A549 (cell line): ENCODE measurements at regions of chr15 and their contacts with region 1.

Region 1: GRCh38 chr15:78108299-78109084 is 16.1 kb downstream of the SH2D7 start:
- DNase-seq: peak; percentile 89 to 98
- ATAC-seq: peak; percentile 85 to 96
- H3K4me3 ChIP-seq: no peak overlapping the region
- H3K27ac ChIP-seq: no peak overlapping the region
- H3K4me1 ChIP-seq: no peaks in the 10 kb centered on the region
- CTCF ChIP-seq: peak; percentile 99
- EP300 ChIP-seq: no peak
- POLR2A ChIP-seq: no peak
- RAD21 ChIP-seq: peak; percentile 92 to 95

Region 2: DNA sequence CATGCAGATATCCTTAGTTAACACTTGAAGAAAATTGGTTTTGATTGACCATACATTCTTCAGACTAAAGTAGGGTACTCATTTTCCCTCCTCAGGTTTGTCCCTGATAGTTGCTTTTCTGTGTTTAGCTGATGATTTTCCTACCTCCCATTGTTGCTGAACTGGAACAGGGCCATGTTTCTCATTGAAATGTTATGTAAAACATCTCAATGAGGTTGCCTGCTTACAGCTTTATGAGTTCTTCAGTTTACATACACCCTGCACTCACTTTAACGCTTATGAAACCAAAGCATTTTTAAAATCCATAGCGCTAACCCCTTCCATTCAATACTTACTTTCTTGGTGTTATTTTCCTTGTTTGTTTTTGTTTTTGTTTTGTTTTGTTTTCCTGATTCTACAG is 625.9 kb before region 1 on chr15:
- CTCF ChIA-PET with region 1: no interaction called
- POLR2A ChIA-PET with region 1: no interaction called
- DNase-seq: no peak
- ATAC-seq: no peak
- H3K4me3 ChIP-seq: no peak overlapping the region
- H3K27ac ChIP-seq: no peak overlapping the region
- H3K4me1 ChIP-seq: peaks cover 9% of the 10 kb centered on the region; the same call in 2 of the 3 replicates
- CTCF ChIP-seq: no peak
- EP300 ChIP-seq: no peak
- POLR2A ChIP-seq: no peak
- RAD21 ChIP-seq: no peak

Region 3: GRCh38 chr15:77821188-77821958 is 287.1 kb before region 1 on chr15:
- CTCF ChIA-PET with region 1: no interaction called
- POLR2A ChIA-PET with region 1: no interaction called
- DNase-seq: peak; percentile 77 to 93
- ATAC-seq: peak; percentile 76 to 92
- H3K4me3 ChIP-seq: no peak overlapping the region
- H3K27ac ChIP-seq: no peak overlapping the region
- H3K4me1 ChIP-seq: peaks cover 8% of the 10 kb centered on the region; the same call in 1 of the 3 replicates
- CTCF ChIP-seq: peak; percentile 81
- EP300 ChIP-seq: no peak
- POLR2A ChIP-seq: no peak
- RAD21 ChIP-seq: peak; percentile 90 to 95

Region 4: DNA sequence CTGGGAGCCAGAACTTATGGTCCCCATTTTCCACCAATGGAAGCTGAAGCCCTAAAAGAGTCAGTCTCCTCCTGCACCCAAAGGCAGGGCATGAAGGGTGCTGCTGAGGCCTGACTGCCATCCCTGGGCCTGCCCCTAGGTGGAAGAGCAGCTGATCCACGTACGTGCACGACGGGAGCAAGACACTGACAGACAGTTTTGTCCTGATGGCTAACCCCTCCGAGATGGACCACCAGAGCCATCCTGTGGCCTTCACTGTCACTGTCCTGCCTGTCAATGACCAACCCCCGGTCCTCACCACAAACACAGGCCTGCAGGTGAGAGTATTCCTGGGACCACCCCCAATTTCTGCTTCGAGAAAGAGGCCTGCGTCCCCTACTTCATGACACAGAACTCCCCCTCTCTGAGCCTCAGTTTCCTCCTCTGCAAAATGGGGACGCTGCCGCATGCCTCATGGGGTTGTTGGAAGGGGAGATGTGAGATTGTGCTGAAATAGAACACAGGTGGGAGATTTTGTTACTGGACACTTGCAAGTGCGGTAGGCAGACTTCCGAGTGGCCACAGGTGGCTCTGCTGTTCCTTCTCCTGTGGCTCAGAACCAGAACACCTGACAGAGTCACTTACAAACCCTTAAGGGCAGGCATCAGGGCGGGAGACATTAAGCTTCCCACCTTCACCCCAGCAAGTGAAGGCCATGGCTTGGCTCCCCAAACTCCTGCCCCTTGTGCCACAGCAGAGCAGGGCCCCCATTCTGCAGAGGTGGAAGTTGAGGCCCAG is 206.3 kb before region 1 on chr15:
- CTCF ChIA-PET with region 1: interaction called, 14 read pairs
- POLR2A ChIA-PET with region 1: no interaction called
- DNase-seq: peak; percentile 32 to 49
- ATAC-seq: peak; percentile 53 to 76; a peak in 3 of 6 replicates
- H3K4me3 ChIP-seq: no peak overlapping the region
- H3K27ac ChIP-seq: no peak overlapping the region
- H3K4me1 ChIP-seq: no peaks in the 10 kb centered on the region
- CTCF ChIP-seq: no peak
- EP300 ChIP-seq: no peak
- POLR2A ChIP-seq: no peak
- RAD21 ChIP-seq: no peak

Region 5: DNA sequence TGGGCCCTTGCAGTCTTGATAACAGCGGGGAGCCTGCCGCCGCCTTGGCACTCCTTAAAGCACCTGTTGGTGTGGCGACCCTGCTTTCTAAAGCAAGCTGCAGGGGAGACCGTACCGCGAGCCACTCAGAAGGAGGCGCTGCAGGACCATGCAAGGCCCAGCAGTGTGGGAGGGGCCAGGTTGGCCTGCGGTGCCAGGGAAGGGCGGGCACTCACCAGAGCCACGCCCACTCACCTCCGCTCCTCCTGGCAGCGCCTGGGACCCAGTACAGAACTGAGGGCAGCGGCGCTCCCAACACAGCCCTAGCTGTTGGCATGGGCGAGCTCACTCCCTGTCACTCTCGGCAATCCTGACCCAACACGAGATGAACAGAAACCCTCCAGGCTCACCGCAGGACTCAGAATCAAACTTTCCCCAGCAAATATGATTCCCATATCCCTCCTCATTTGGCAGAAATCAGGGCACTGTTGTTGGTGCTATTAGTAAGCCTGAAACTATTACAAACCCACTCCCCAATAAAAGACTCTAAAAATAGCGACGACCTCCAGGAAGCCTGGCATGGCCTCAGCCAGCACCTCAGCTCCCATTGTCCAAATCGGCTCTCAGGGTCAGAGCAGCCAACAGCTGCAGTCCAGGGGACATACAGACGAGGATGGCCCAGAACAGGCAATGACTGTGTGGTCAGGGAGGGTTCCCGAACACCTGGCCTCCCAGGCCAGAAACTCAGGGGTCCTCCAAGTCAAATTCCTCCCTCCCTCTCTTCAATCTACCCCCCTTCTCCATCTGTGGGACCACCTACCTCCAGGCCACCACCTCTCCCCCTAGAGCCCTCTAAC is 108.2 kb before region 1 on chr15:
- CTCF ChIA-PET with region 1: interaction called, 265 read pairs
- POLR2A ChIA-PET with region 1: no interaction called
- DNase-seq: peak; percentile 86 to 92
- ATAC-seq: peak; percentile 88 to 98
- H3K4me3 ChIP-seq: no peak overlapping the region
- H3K27ac ChIP-seq: no peak overlapping the region
- H3K4me1 ChIP-seq: peaks cover 6% of the 10 kb centered on the region
- CTCF ChIP-seq: peak; percentile 90
- EP300 ChIP-seq: no peak
- POLR2A ChIP-seq: no peak
- RAD21 ChIP-seq: peak; percentile 98 to 99

Region 6: GRCh38 chr15:78093242-78094020 is 15.1 kb before region 1 on chr15:
- CTCF ChIA-PET with region 1: interaction called, 93 read pairs
- POLR2A ChIA-PET with region 1: no interaction called
- DNase-seq: no peak
- ATAC-seq: peak in 1 of 2 experiments; percentile 24; a peak in 2 of 6 replicates
- H3K4me3 ChIP-seq: no peak overlapping the region
- H3K27ac ChIP-seq: no peak overlapping the region
- H3K4me1 ChIP-seq: 0 out of 3 replicates have a peak, but pooled peaks cover 3% of the 10 kb centered on the region
- CTCF ChIP-seq: no peak
- EP300 ChIP-seq: no peak
- POLR2A ChIP-seq: no peak
- RAD21 ChIP-seq: no peak

Region 7: DNA sequence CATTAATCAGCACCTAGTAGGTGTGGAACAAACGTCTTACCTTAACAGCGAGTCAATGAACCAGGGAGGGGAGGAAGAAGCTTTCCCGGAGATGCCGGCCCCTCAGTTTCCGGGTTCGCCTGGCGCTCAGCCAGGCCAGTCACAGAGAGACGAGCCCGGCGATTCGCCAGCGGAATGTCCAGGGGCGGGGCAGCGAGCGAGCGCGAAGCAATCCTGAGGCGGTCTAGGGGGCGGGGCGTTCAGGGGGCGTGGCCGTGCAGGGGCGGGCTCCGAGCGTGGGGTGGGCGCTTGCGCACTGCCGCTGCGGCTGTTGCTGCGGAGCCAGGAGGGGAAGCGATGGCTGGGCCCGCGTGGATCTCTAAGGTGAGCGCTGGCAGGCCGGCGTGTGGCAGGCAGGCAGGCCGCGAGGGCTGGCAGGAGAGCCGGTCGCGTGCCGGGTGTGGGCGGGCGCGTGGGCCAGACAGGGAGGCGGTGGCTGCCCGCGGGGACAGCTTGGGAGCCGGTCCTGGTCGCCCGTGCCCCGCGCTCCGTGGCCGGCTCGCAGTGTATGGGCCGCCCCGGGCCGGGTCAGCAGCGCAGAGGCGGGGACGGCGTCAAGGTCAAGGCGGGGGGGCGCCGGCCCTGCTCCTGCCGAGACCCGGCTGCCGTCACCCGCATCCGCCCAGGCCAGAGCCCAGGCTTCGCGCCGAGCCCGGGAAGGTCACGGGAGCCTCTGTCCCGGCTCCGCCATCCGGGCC is 40.7 kb after region 1 on chr15 and contains the start of gene IDH3A:
- CTCF ChIA-PET with region 1: interaction called, 26 read pairs
- POLR2A ChIA-PET with region 1: no interaction called
- DNase-seq: peak; percentile 97
- ATAC-seq: peak; percentile 93 to 95
- H3K4me3 ChIP-seq: peak within 1 kb of the TSS; percentile 74
- H3K27ac ChIP-seq: peak within 1 kb of the TSS; percentile 80 to 92
- H3K4me1 ChIP-seq: peaks cover 16% of the 10 kb centered on the region
- CTCF ChIP-seq: no peak
- EP300 ChIP-seq: no peak
- POLR2A ChIP-seq: peak; percentile 97
- RAD21 ChIP-seq: no peak
- polyA plus RNA-seq, gene IDH3A: 148 and 149 TPM in 2 replicates

Region 8: DNA sequence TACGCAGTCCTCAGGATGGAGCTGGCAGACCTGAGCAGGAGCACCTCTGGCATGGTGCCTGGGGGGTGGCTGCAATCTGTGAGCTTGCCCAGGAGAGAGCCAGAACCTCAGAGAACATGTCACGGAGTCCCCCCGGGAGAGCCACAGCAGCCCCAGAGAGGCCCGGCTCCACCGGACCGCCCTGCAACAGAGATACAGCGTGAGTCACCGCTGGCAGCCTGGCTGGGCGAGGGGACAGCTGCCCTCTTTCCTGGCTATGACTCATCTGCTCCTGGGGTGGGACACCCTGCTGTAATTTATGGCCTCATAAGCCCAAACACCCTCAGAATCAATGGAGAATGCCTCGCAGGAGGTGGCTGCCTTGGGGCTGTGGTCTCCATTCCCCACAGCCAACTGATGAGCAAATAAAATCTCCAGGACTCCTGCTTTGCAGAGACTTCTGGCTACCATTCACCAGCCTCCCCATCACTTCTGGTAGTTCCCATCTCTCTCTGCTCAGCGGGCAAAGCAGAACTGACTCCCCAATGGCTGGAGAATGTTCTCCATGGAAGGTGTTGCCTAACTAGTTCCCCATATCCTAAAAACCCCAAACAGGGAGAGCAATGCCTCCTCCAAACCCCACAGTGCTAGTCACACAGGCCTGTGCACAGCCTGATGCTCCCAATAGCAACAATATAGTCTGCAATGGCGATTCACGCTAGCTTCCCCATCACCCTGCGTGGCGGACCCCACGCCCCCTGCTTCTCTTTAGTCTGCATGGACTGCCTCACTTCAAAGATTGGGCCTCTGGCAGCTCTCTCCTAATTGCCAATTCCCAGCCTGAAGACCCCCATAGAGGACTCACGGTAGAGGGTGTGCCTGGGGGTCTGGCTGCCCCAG is 104.3 kb after region 1 on chr15:
- CTCF ChIA-PET with region 1: interaction called, 11 read pairs
- POLR2A ChIA-PET with region 1: no interaction called
- DNase-seq: peak; percentile 66 to 89
- ATAC-seq: peak; percentile 82 to 88
- H3K4me3 ChIP-seq: no peak overlapping the region
- H3K27ac ChIP-seq: peak overlapping the region; percentile 52 to 69
- H3K4me1 ChIP-seq: peaks cover 56% of the 10 kb centered on the region
- CTCF ChIP-seq: no peak
- EP300 ChIP-seq: no peak
- POLR2A ChIP-seq: no peak
- RAD21 ChIP-seq: no peak

Region 9: DNA sequence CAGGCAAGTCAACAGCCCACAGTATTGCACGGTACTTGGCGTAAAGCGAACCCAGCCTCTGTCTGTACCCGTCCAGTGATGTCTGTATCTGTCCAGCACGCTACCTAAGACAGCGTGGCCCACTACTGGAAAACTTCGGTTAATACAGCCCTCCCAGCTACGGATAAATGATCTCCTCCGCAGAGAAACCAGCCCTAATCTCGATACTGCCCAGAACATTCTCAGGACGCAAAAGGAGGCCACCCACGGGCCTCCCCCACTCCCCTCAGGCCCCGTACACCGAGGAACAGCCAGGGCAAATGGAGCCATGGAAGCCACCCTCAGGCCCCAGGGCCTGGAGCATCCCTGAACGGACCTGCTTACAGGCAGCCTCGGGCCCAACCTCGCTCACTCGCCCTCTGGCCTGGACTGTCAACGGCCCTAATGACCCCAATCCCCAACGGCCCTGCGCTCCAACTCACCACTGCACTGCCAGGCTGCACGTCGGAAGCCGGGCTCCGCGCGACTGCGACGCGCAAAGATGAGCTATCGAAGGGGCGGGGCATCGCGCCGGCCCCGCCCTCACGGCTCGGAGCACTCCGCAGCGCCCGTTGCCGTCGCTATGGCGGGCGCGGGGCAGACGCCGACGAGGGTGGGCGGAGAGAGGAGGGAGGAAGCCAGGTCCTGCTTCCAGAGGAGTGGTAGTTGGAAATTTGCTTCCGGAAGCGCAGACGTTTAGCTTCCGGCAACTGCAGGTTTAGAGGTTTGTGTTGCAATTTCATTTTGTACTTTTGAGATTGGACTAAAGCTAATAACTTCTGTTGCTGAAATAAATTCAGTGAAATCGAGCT is 190.8 kb after region 1 on chr15 and contains the start of gene SKIC8:
- CTCF ChIA-PET with region 1: interaction called, 10 read pairs
- POLR2A ChIA-PET with region 1: interaction called, 4 read pairs
- DNase-seq: peak; percentile 95 to 97
- ATAC-seq: peak; percentile 95 to 98
- H3K4me3 ChIP-seq: peak within 1 kb of the TSS; percentile 79
- H3K27ac ChIP-seq: peak within 1 kb of the TSS; percentile 77 to 88
- H3K4me1 ChIP-seq: peaks cover 25% of the 10 kb centered on the region
- CTCF ChIP-seq: no peak
- EP300 ChIP-seq: no peak
- POLR2A ChIP-seq: peak; percentile 97
- RAD21 ChIP-seq: no peak
- polyA plus RNA-seq, gene SKIC8: 162 and 177 TPM in 2 replicates

Region 10: GRCh38 chr15:78506971-78507830 is 398.7 kb after region 1 on chr15 and contains the start of gene HYKK:
- CTCF ChIA-PET with region 1: no interaction called
- POLR2A ChIA-PET with region 1: no interaction called
- DNase-seq: peak; percentile 98 to 99
- ATAC-seq: peak; percentile 96 to 97
- H3K4me3 ChIP-seq: peak within 1 kb of the TSS; percentile 71
- H3K27ac ChIP-seq: peak within 1 kb of the TSS; percentile 70 to 84
- H3K4me1 ChIP-seq: peaks cover 10% of the 10 kb centered on the region; the same call in 2 of the 3 replicates
- CTCF ChIP-seq: no peak
- EP300 ChIP-seq: no peak
- POLR2A ChIP-seq: peak; percentile 87
- RAD21 ChIP-seq: no peak; a peak in 1 of 5 replicates
- polyA plus RNA-seq, gene HYKK: 12.9 and 16.7 TPM in 2 replicates